ENCODE measurements at regions of chr16 and their contacts with region 1.

Region 1: DNA sequence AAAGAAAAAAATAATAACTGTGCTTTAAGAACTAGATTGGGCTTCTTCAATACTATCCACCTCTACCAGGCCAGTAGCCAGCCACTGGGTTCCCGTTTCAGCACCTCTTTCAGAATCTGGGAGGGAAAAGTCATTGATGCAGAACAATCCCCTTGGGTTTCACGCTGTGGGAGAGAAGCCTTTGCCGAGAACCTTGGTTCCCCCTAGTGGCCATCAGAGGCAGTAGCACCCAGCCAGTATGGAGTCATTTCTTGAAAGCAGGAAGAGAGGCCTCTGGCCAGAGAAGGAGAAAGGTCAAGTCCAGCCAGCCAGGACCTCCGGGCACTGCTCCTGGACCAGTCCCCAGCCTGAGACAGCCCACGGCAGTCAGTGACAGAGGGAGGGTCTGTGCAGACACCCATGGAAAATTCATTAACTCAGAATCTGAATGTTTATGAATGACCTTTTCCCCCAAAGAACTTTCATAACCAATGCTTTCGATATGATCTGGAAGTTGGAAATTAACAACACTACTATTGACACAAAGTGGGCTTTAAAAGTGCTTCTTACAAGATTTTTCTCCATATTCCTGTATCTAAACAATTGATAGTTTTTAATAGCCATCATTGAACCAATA is 51.2 kb upstream of the CDH5 start:
- DNase-seq: peak; percentile 28
- H3K4me3 Mint-ChIP-seq: no peak overlapping the region
- H3K27ac Mint-ChIP-seq: no peak overlapping the region
- H3K4me1 Mint-ChIP-seq: peaks cover 5% of the 10 kb centered on the region
- H3K27me3 Mint-ChIP-seq: peaks cover 3% of the 10 kb centered on the region

Region 2: DNA sequence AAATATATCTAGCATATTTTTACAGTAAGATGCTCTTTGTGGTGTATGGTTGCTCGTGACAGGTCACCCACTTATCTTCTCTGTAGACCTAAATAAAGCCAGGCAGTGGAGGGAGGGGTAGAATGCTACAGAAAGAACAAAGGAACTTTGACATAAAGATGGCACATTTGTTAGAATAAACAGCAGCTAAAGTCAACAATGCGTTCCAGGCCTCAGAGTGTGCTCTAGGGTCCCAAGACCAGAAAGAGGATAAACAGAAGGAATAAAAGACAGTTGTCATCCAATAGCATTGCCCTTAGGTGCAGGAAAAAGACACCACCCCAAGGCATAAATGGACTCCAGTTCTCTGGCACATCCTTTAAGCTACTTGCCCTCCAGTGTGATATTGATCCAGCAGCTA is 670.5 kb before region 1 on chr16:
- intact Hi-C with region 1: no loop called
- DNase-seq: no peak
- H3K4me3 Mint-ChIP-seq: no peak overlapping the region
- H3K27ac Mint-ChIP-seq: no peak overlapping the region
- H3K4me1 Mint-ChIP-seq: no peaks in the 10 kb centered on the region
- H3K27me3 Mint-ChIP-seq: no peaks in the 10 kb centered on the region

Region 3: GRCh38 chr16:66274335-66275110 is 40.8 kb before region 1 on chr16:
- intact Hi-C with region 1: loop called (anchors 1 kb)
- DNase-seq: no peak
- H3K4me3 Mint-ChIP-seq: no peak overlapping the region
- H3K27ac Mint-ChIP-seq: no peak overlapping the region
- H3K4me1 Mint-ChIP-seq: no peaks in the 10 kb centered on the region
- H3K27me3 Mint-ChIP-seq: peaks cover 14% of the 10 kb centered on the region

Region 4: DNA sequence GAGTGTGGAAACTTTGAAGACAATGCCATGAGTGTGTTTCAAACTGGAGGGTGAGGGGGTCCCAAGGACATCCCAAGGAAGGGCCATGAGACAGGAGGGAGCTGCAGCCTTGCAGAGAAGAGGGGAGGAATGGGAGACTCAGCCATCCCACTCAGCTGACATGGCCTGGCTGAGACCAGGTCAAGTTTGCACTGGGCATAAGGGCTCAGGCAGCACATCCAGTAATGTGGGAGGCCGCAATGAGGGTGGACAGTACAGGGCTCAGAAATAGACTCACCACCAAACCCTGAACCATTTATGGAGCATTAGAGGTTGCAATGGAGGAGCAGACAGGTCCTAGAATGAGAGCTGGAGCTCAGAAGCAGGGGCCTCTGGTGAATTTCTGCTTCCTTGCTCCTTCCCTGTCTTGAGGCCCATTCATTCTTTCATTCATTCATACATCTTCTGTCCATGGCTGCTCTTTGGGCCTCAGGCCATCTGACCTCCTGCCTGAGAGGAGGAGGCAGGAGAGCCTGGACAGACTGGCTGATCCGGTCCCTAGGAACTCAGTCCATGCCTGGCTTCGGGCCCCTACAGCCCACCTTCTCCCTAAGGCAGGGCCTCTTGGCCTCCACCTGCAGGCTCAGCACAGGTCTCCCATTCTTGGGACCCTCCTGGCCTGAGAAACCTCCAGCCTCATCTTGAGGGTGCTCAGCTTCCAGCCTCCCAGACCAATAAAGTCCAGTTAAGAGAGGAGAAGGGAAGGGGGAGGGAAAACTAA is 19.4 kb before region 1 on chr16:
- intact Hi-C with region 1: no loop called
- DNase-seq: no peak
- H3K4me3 Mint-ChIP-seq: no peak overlapping the region
- H3K27ac Mint-ChIP-seq: no peak overlapping the region
- H3K4me1 Mint-ChIP-seq: peaks cover 11% of the 10 kb centered on the region
- H3K27me3 Mint-ChIP-seq: peaks cover 4% of the 10 kb centered on the region

Measured in activated T-helper 1 cell treated with anti-CD3 and anti-CD28 coated beads, Interleukin-12 subunit alpha, Interleukin-12 subunit beta, Interleukin-2, Interleukin-4 antibody, amounts not matched to agents 30 ng/mL and 10 ng/mL and 1 ng/mL, durations not matched to agents 14 hours and 24 hours and 36 hours (primary cell).